ENCODE measurements at regions of chr10 and their contacts with region 1.

Region 1: GRCh38 chr10:82796510-82796909 is 921.5 kb downstream of the NRG3 start:
- DNase-seq: no peak

Region 2: DNA sequence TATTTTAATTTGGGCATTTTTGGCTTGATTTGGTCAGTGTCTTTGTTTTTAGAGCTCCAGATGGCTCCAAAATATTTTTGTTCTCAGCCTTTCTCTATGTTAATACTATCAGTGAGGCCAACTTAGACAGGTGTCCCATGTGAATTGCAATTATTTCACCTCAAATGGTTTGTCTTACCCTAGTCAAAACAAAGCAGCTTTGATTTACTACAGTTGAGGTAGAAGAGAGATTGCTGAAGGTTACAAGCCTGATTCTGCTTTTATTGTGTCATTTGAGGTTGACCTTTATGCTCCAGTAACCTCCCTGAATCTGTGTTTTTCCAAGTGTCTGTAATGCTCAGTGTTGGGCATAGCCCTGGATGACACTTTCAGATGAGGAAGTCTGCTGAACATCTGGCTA is 38.6 kb before region 1 on chr10:
- intact Hi-C with region 1: no loop called
- DNase-seq: no peak

Region 3: GRCh38 chr10:82856957-82857613 is 60.6 kb after region 1 on chr10:
- intact Hi-C with region 1: no loop called
- DNase-seq: no peak

Region 4: GRCh38 chr10:83871187-83872081 is 1074.9 kb after region 1 on chr10:
- intact Hi-C with region 1: loop called (anchors 10 kb)
- DNase-seq: no peak

Measured in cardiac septum (tissue), 1 donor.